Endothelial cell of umbilical vein (primary cell): ENCODE measurements at regions of chr2 and their contacts with region 1.

Region 1: DNA sequence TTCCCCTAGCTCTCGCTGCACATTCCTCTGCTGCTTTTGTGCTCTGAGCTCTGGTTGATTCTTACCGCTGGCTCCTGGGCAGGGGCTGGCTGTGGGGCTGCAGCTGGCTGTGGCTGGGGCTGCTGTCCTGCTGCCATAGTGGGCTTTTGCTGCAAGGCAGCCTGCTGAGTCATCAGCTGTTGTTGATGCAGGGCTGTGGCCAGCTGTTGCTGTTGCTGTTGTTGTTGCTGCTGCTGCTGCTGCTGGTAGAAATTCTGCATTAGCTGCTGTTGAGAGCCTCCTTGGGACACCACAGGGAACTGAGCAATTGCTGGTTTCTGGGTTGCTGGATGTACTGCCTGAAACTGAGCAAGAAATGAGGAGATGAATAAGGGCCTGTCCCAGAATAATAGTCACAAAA is 77.2 kb upstream of the NFU1 start:
- DNase-seq: peak; percentile 67
- H3K4me3 ChIP-seq: no peak overlapping the region
- H3K27ac ChIP-seq: no peak overlapping the region
- H3K4me1 ChIP-seq: no peaks in the 10 kb centered on the region
- H3K27me3 ChIP-seq: no peaks in the 10 kb centered on the region
- CTCF ChIP-seq: no peak
- POLR2A ChIP-seq: no peak

Region 2: GRCh38 chr2:69375494-69376353 is 138.7 kb before region 1 on chr2:
- CTCF ChIA-PET with region 1: no interaction called
- POLR2A ChIA-PET with region 1: no interaction called
- dilution Hi-C with region 1: no loop called
- intact Hi-C with region 1: loop called (anchors 10 kb)
- DNase-seq: peak; percentile 40
- H3K4me3 ChIP-seq: no peak overlapping the region
- H3K27ac ChIP-seq: no peak overlapping the region
- H3K4me1 ChIP-seq: no peaks in the 10 kb centered on the region
- H3K27me3 ChIP-seq: no peaks in the 10 kb centered on the region
- CTCF ChIP-seq: peak; percentile 39 to 47
- POLR2A ChIP-seq: no peak

Region 3: GRCh38 chr2:69453475-69454129 is 60.8 kb before region 1 on chr2:
- CTCF ChIA-PET with region 1: no interaction called
- POLR2A ChIA-PET with region 1: no interaction called
- dilution Hi-C with region 1: no loop called
- intact Hi-C with region 1: no loop called
- DNase-seq: no peak
- H3K4me3 ChIP-seq: no peak overlapping the region
- H3K27ac ChIP-seq: no peak overlapping the region
- H3K4me1 ChIP-seq: no peaks in the 10 kb centered on the region
- H3K27me3 ChIP-seq: no peaks in the 10 kb centered on the region
- CTCF ChIP-seq: no peak
- POLR2A ChIP-seq: no peak